Activated T-helper 1 cell treated with anti-CD3 and anti-CD28 coated beads, Interleukin-12 subunit alpha, Interleukin-12 subunit beta, Interleukin-2, Interleukin-4 antibody, amounts not matched to agents 30 ng/mL and 10 ng/mL and 1 ng/mL, durations not matched to agents 14 hours and 24 hours and 36 hours (primary cell): ENCODE measurements at regions of chr4 and their contacts with region 1.

Region 1: DNA sequence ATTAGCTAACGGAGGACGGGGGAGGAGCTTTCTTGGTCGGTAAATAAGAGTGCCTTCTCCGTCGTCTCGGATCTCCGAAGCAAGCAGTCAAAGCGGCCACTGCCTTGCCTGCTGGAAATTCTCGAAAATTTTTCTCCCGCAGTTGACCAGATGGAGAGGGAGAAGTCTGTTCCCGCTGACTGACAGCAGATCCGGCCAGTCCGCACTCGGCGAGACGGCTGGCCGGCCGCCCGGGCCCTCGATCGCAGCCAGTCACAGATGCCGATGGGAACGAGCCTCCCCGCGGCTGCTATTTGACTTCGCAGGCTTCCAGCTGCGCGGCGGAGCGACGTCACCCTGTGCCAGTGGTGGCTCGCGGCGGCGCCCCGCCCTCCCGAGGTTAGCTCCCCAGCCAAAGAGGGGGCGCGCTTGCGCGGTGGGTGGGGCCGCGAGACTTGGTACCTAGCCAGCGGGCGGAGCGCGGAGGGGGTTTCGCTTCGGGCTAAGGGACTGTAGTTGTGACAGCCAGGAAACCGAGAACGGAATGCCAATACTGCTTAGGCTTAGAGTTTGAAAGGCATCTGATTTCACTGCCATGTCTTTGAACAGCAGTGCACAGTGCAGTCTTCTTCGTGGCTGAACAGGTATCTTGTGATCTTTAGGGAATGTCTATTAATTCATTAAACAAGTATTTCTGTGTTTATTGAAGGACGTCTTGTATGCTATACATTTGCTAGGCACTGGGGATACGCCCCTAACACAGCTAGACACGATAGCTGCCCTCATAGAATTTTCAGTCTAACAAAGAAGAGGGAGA is at the start of gene PPM1K:
- DNase-seq: peak; percentile 99
- H3K4me3 Mint-ChIP-seq: peak within 1 kb of the TSS; percentile 99
- H3K27ac Mint-ChIP-seq: peak within 1 kb of the TSS; percentile 99
- H3K4me1 Mint-ChIP-seq: peaks cover 47% of the 10 kb centered on the region
- H3K27me3 Mint-ChIP-seq: no peaks in the 10 kb centered on the region
- total RNA-seq, gene PPM1K: 37.3 and 39.5 TPM in 2 replicates

Region 2: DNA sequence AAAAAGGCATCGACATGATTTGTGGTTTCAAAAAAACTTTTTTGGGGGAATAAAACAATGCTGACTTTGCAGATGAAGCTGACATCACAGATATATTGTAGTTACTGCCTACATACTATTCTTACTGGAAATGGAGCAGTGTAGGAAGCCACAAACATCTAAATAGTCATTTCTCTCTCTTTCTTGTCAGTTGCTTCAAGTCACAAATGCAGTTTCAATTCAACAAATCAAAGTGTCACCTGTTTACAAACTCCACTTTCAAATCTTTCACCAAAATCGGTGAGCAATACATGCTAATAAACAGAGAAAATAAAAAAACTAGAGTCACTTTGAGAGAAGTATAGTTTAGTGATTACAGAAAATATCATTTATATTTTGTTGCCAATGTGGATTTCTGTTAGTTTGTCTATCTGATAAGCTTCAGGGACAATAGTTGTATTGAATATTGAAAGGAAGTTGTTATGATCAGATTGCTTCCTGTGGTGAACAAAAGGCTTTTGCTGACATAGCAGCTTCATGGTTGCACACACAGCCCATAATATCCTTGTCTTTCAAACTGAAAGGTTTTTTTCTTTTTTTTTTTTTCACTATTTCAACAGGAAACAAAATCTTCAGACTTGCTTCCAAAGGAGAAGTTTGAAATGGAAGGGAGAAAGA is 1740.2 kb before region 1 on chr4:
- intact Hi-C with region 1: loop called (anchors 10 kb)
- DNase-seq: peak; percentile 7
- H3K4me3 Mint-ChIP-seq: peak overlapping the region; percentile 75
- H3K27ac Mint-ChIP-seq: peak overlapping the region; percentile 96
- H3K4me1 Mint-ChIP-seq: peaks cover 39% of the 10 kb centered on the region
- H3K27me3 Mint-ChIP-seq: peaks cover 5% of the 10 kb centered on the region

Region 3: GRCh38 chr4:88007304-88008121 is 277.1 kb before region 1 on chr4 and contains the start of gene PKD2:
- intact Hi-C with region 1: loop called (anchors 5 kb)
- DNase-seq: peak; percentile 79
- H3K4me3 Mint-ChIP-seq: peak within 1 kb of the TSS; percentile 89
- H3K27ac Mint-ChIP-seq: peak within 1 kb of the TSS; percentile 80
- H3K4me1 Mint-ChIP-seq: peaks cover 41% of the 10 kb centered on the region
- H3K27me3 Mint-ChIP-seq: peaks cover 20% of the 10 kb centered on the region
- total RNA-seq, gene PKD2: 10.1 and 11.7 TPM in 2 replicates

Region 4: DNA sequence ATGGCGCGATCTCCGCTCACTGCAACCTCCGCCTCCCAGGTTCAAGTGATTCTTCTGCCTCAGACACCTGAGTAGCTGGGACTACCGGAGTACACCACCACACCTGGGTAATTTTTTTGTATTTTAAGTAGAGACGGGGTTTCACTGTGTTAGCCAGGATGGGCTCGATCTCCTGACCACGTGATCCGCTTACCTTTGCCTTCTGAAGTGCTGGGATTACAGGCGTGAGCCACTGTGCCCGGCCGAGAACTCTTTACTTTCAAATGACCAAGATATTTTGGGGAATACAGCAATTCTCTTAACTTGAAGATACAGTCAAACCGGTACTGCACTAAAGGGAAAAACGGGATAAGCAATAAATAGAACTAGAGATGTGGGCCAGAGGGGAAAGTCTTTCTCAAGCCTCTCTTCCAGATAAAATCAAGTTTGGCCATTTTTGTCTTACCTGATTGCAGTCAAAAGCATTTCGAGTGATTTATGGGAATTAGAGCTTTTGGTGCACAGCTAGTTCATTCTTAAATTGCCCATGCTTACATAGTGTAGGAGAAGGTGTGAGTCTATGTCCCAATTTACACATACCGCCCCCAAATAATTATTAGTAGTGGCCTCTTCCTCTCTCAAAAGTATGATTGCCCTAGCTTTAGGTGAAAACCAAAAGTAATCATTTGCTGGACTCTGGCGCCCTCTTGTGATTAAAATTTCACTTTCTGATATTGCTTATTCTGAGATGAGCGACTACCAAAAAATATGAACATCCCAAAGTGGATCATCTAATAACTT is 73.0 kb before region 1 on chr4:
- intact Hi-C with region 1: no loop called
- DNase-seq: peak; percentile 34
- H3K4me3 Mint-ChIP-seq: no peak overlapping the region
- H3K27ac Mint-ChIP-seq: no peak overlapping the region
- H3K4me1 Mint-ChIP-seq: no peaks in the 10 kb centered on the region
- H3K27me3 Mint-ChIP-seq: peaks cover 9% of the 10 kb centered on the region

Region 5: GRCh38 chr4:88320780-88321373 is 36.2 kb after region 1 on chr4:
- intact Hi-C with region 1: loop called (anchors 1 kb)
- DNase-seq: peak; percentile 36
- H3K4me3 Mint-ChIP-seq: peak overlapping the region; percentile 82
- H3K27ac Mint-ChIP-seq: peak overlapping the region; percentile 95
- H3K4me1 Mint-ChIP-seq: peaks cover 22% of the 10 kb centered on the region
- H3K27me3 Mint-ChIP-seq: no peaks in the 10 kb centered on the region

Region 6: GRCh38 chr4:88523325-88524129 is 238.9 kb after region 1 on chr4 and contains the start of gene PYURF:
- intact Hi-C with region 1: loop called (anchors 2 kb)
- DNase-seq: peak; percentile 79
- H3K4me3 Mint-ChIP-seq: peak within 1 kb of the TSS; percentile 99
- H3K27ac Mint-ChIP-seq: peak within 1 kb of the TSS; percentile 97
- H3K4me1 Mint-ChIP-seq: peaks cover 60% of the 10 kb centered on the region
- H3K27me3 Mint-ChIP-seq: peaks cover 2% of the 10 kb centered on the region
- total RNA-seq, gene PYURF: 55.9 and 61.5 TPM in 2 replicates

Region 7: DNA sequence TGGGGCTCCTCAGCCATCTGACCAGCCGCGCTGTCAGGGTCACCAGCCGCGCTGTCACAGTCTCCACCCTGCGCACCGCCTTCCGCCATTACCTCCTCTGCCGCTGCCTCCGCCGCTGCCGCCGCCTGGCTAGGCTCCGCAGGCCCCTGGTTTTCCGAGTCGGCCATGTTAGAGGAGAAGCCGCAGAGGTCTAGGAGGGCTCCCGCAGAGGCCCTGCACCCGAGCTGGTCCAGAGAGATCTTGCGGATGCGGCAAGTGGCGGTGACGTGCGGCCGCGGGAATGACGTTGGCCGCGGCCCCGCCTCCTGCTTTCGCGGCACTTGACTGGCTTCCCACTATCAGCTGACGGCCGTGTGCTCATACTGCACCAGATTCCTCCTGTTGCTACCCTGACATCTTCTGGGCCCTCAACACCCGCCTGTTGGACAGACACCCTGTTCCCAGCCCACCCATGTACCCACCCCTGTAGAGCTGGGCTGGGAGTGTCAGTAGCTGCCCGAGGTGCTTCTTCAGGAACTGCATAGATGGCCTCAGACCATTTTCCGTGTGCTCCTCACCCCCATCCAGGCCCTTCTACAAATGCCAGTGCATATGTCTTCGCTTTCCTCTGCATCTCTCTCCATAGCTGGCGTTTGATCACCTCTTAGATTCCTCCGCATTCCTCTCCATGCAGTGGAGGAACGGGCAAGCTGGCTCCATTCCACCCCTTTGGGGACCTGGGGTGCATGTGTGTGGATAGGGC is 413.1 kb after region 1 on chr4 and contains the start of gene NAP1L5:
- intact Hi-C with region 1: loop called (anchors 1 kb)
- DNase-seq: peak; percentile 61
- H3K4me3 Mint-ChIP-seq: peak within 1 kb of the TSS; percentile 88
- H3K27ac Mint-ChIP-seq: peak within 1 kb of the TSS; percentile 83
- H3K4me1 Mint-ChIP-seq: no peaks in the 10 kb centered on the region
- H3K27me3 Mint-ChIP-seq: peaks cover 2% of the 10 kb centered on the region
- total RNA-seq, gene NAP1L5: 5.5 and 6.1 TPM in 2 replicates